ENCODE measurements at regions of chr18 and their contacts with region 1.

Region 1: DNA sequence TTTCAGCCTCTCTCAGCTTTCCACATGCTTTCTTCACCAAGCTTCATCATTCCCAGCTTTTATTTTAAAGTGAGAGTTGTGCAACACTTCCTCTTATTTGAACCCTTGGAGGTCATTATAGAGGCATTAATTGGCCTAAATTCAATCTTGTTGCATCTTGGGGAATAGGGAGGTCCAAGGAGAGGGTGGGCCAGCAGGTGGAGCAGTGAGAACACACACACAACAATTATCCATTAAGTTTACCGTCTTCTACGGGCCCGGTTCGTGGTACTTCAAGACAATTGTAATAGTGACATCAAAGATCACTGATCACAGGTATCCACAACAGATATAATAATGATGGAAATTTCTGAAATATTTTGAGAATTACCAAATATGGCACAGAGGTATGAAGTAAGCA is 457.2 kb upstream of the SMIM21 start:
- DNase-seq: no peak
- H3K4me3 ChIP-seq: no peak overlapping the region
- H3K27ac ChIP-seq: no peak overlapping the region
- H3K4me1 ChIP-seq: no peaks in the 10 kb centered on the region
- H3K27me3 ChIP-seq: no peaks in the 10 kb centered on the region
- CTCF ChIP-seq: no peak

Region 2: GRCh38 chr18:75962036-75962572 is 77.4 kb after region 1 on chr18:
- CTCF ChIA-PET with region 1: no interaction called
- dilution Hi-C with region 1: loop called (anchors 5 kb)
- in situ Hi-C with region 1: no loop called
- intact Hi-C with region 1: no loop called
- DNase-seq: no peak
- H3K4me3 ChIP-seq: no peak overlapping the region
- H3K27ac ChIP-seq: no peak overlapping the region
- H3K4me1 ChIP-seq: no peaks in the 10 kb centered on the region
- H3K27me3 ChIP-seq: no peaks in the 10 kb centered on the region
- CTCF ChIP-seq: no peak

Region 3: DNA sequence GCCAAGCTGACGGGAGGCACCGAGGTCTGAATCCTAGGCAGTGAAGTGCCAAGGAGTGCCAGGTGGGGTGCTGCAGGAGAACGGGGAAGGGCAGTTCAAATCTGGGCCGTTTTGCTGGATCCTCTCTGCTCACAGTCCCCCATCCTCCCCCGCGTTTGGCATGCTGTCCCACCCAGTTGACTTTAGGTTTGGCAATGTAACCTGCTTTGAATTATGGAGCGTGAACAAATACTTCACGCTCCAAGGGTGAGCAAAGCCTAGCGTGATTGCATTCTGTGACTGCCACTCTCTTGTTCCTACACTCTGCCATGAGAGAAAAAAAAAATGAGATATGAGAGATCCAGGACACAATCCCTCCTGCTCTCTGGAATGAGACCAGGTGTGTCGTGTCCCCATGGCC is 228.4 kb after region 1 on chr18:
- CTCF ChIA-PET with region 1: no interaction called
- dilution Hi-C with region 1: no loop called
- in situ Hi-C with region 1: no loop called
- intact Hi-C with region 1: no loop called
- DNase-seq: no peak
- H3K4me3 ChIP-seq: no peak overlapping the region
- H3K27ac ChIP-seq: no peak overlapping the region
- H3K4me1 ChIP-seq: no peaks in the 10 kb centered on the region
- H3K27me3 ChIP-seq: no peaks in the 10 kb centered on the region
- CTCF ChIP-seq: no peak

Region 4: GRCh38 chr18:77000527-77000926 is 1115.8 kb after region 1 on chr18:
- CTCF ChIA-PET with region 1: no interaction called
- dilution Hi-C with region 1: no loop called
- in situ Hi-C with region 1: no loop called
- intact Hi-C with region 1: no loop called
- DNase-seq: peak; percentile 17
- H3K4me3 ChIP-seq: no peak overlapping the region
- H3K27ac ChIP-seq: no peak overlapping the region
- H3K4me1 ChIP-seq: no peaks in the 10 kb centered on the region
- H3K27me3 ChIP-seq: no peaks in the 10 kb centered on the region
- CTCF ChIP-seq: peak; percentile 95 to 97